ENCODE measurements at regions of chr2 and their contacts with region 1.

Region 1: DNA sequence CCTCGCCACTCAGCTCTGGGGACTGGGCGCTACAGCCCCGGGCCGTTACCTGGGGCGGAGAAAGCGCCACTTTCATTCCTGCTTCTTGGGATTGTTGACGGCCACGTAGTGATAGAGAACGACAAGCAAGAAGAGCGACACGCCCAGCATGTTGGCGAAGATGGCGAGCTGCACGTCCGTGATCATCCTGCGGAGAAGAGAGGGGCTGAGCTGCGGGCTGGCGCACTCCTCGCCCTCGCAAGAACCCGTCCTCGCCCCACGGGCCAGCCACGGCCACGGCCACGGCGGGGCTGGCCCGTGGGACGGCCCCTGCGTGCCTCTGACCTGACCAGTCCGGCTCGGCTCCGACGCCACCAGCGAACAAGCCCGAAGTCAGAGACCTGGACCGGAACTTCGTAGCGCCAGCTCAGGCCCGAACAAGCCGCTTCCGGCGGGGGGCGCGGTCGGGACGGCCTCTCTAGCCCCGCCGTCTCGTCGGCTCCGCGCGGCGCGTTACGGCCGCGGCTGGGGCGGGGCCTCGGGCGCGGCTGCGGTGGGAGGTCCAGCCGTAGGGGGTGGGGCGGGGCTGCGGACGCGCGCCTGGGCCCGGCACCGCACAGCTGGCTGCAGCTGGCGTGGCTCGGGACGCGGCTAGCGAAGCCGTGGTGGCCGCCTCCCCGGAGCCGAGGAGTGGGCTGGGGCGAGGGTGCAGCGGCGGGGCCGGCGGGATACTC is at the start of gene OST4:
- DNase-seq: peak; percentile 81 to 97 (median 87)
- ATAC-seq: peak; percentile 96
- H3K4me3 ChIP-seq: peak within 1 kb of the TSS; percentile 83
- H3K4me3 Mint-ChIP-seq: peak within 1 kb of the TSS; percentile 96 to 99 (median 97)
- H3K27ac ChIP-seq: peak within 1 kb of the TSS; percentile 97
- H3K27ac Mint-ChIP-seq: peak within 1 kb of the TSS; percentile 93 to 98 (median 97)
- H3K4me1 ChIP-seq: peaks cover 29 to 41% of the 10 kb centered on the region in 2 donors
- H3K4me1 Mint-ChIP-seq: peaks cover 57 to 86% (median 76%) of the 10 kb centered on the region in 7 donors
- H3K27me3 ChIP-seq: no peaks in the 10 kb centered on the region
- H3K27me3 Mint-ChIP-seq: no peaks in the 10 kb centered on the region
- total RNA-seq, gene OST4: 241 to 398 (median 263) TPM

Region 2: GRCh38 chr2:27032495-27033252 is 38.8 kb before region 1 on chr2 and contains the start of gene TMEM214:
- CTCF ChIA-PET with region 1: no interaction called
- POLR2A ChIA-PET with region 1: interaction called, 15 read pairs
- intact Hi-C with region 1: loop called (anchors 1 to 2 kb)
- DNase-seq: peak; percentile 54 to 88 (median 63)
- ATAC-seq: peak; percentile 97
- H3K4me3 ChIP-seq: peak within 1 kb of the TSS; percentile 99
- H3K4me3 Mint-ChIP-seq: peak within 1 kb of the TSS; percentile 91 to 97 (median 93)
- H3K27ac ChIP-seq: peak within 1 kb of the TSS; percentile 87
- H3K27ac Mint-ChIP-seq: peak within 1 kb of the TSS; percentile 84 to 95 (median 91)
- H3K4me1 ChIP-seq: peaks cover 11 to 19% of the 10 kb centered on the region in 2 donors
- H3K4me1 Mint-ChIP-seq: peaks cover 24 to 63% (median 41%) of the 10 kb centered on the region in 7 donors
- H3K27me3 ChIP-seq: no peaks in the 10 kb centered on the region
- H3K27me3 Mint-ChIP-seq: no peaks in the 10 kb centered on the region
- total RNA-seq, gene TMEM214: 36.7 to 114 (median 67.5) TPM

Region 3: DNA sequence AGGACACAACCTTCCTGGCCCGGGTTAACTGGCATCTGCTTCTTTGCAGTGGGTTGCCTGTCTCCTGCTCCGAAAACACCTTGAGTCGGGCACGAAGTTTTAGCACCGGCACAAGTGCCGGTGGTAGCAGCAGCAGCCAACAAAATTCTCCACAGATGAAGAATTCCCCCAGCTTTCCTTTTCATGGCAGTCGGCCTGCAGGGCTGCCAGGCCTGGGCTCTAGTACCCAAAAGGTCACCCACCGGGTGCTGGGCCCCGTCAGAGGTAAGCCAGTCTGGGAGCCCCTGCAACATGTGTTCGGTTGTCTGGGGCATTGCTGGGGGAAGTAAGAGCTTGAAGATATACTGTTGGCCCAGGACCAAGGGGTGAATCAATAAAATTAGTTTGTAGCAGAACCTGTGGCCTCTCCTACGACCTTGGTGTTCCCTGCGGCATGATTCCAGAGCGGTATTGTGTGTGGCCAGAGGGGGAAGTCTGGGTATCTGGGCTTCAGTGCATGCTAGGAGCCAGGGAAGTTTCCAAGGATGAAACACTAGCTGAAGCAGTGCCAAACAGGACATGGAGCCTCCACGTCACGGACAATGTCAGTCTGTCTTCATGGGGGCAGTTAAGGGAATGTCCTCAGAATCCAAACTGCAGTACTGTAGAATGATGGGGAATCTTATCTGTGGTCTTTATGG is 12.2 kb before region 1 on chr2:
- CTCF ChIA-PET with region 1: interaction called, 3 read pairs
- POLR2A ChIA-PET with region 1: interaction called, 216 read pairs
- intact Hi-C with region 1: no loop called
- DNase-seq: no peak
- ATAC-seq: no peak
- H3K4me3 ChIP-seq: no peak overlapping the region
- H3K4me3 Mint-ChIP-seq: no peak overlapping the region
- H3K27ac ChIP-seq: no peak overlapping the region
- H3K27ac Mint-ChIP-seq: peak overlapping the region in 2 of 9 donors; percentile 1 to 32
- H3K4me1 ChIP-seq: no peaks in the 10 kb centered on the region
- H3K4me1 Mint-ChIP-seq: peaks cover 0 to 22% (median 6%) of the 10 kb centered on the region in 7 donors
- H3K27me3 ChIP-seq: no peaks in the 10 kb centered on the region
- H3K27me3 Mint-ChIP-seq: no peaks in the 10 kb centered on the region

Region 4: DNA sequence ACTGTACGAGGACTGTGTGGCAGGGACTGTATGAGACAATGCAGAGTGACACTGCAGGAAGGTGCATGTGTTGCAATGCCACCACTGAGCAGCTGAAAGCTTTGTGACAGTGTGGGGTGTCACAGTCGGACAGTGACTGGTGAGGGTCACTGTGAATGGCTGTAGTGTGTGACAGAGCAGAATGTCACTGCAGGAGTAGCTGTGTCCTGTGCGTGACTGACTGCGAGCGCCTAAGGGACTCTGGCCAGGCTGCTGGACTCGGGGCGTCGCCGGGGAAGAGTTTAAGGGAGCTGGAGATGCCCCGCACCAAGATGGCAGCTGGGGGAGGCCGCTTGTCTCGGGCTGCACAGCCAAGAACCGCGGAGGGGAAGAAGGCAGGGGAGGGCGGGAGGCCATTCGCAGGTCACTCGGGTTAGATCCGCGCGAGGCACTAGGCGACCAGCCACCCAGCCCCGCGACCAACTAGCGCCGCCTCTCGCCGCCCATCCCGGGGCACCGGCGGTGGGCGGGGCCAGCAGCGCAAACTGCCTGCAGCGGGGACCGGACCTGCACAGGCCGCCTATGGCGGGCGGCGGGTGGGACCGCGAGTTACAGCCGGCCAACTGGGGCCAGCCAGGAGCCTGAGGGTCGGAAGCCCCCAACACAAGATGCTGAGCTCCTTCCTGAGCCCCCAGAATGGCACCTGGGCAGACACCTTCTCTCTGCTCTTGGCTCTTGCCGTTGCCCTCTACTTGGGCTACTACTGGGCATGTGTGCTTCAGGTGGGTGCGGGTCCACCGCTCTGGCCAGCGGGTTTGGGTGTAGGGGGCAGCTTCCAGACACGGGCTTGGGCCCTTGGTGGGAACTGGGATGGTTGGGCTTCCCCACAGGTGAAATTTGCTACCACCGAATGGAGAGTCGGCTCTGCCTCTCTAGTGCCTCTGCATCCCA is 52.1 kb after region 1 on chr2 and contains the start of gene ABHD1:
- CTCF ChIA-PET with region 1: no interaction called
- POLR2A ChIA-PET with region 1: interaction called, 14 read pairs
- intact Hi-C with region 1: no loop called
- DNase-seq: peak; percentile 37 to 79 (median 51)
- ATAC-seq: peak; percentile 84
- H3K4me3 ChIP-seq: peak within 1 kb of the TSS; percentile 59
- H3K4me3 Mint-ChIP-seq: peak within 1 kb of the TSS; percentile 83 to 95 (median 92)
- H3K27ac ChIP-seq: peak within 1 kb of the TSS; percentile 61
- H3K27ac Mint-ChIP-seq: peak within 1 kb of the TSS; percentile 78 to 89 (median 86)
- H3K4me1 ChIP-seq: peaks cover 5 to 11% of the 10 kb centered on the region in 2 donors
- H3K4me1 Mint-ChIP-seq: peaks cover 10 to 30% (median 20%) of the 10 kb centered on the region in 7 donors
- H3K27me3 ChIP-seq: peaks cover 0 to 3% of the 10 kb centered on the region in 2 donors
- H3K27me3 Mint-ChIP-seq: peaks cover 11 to 40% (median 14%) of the 10 kb centered on the region in 5 donors
- total RNA-seq, gene ABHD1: 0.53 to 2.0 (median 1.5) TPM

Region 5: GRCh38 chr2:27211829-27212627 is 140.6 kb after region 1 on chr2 and contains the starts of genes ATRAID and SLC5A6:
- CTCF ChIA-PET with region 1: no interaction called
- POLR2A ChIA-PET with region 1: interaction called, 7 read pairs
- intact Hi-C with region 1: loop called in 1 of 2 experiments (anchors 1 kb)
- DNase-seq: peak; percentile 86 to 93 (median 92)
- ATAC-seq: peak; percentile 93
- H3K4me3 ChIP-seq: peak within 1 kb of the TSS; percentile 91
- H3K4me3 Mint-ChIP-seq: peak within 1 kb of the TSS; percentile 89 to 100 (median 99)
- H3K27ac ChIP-seq: peak within 1 kb of the TSS; percentile 100
- H3K27ac Mint-ChIP-seq: peak within 1 kb of the TSS; percentile 99 to 100 (median 100)
- H3K4me1 ChIP-seq: peaks cover 14 to 17% of the 10 kb centered on the region in 2 donors
- H3K4me1 Mint-ChIP-seq: peaks cover 18 to 49% (median 42%) of the 10 kb centered on the region in 7 donors
- H3K27me3 ChIP-seq: no peaks in the 10 kb centered on the region
- H3K27me3 Mint-ChIP-seq: no peaks in the 10 kb centered on the region
- total RNA-seq, gene ATRAID: 71.0 to 113 (median 90.7) TPM
- total RNA-seq, gene SLC5A6: 25.6 to 203 (median 44.3) TPM

Region 6: GRCh38 chr2:27291865-27292264 is 220.4 kb after region 1 on chr2:
- CTCF ChIA-PET with region 1: no interaction called
- POLR2A ChIA-PET with region 1: no interaction called
- intact Hi-C with region 1: no loop called
- DNase-seq: no peak
- ATAC-seq: no peak
- H3K4me3 ChIP-seq: no peak overlapping the region
- H3K4me3 Mint-ChIP-seq: no peak overlapping the region
- H3K27ac ChIP-seq: no peak overlapping the region
- H3K27ac Mint-ChIP-seq: no peak overlapping the region
- H3K4me1 ChIP-seq: no peaks in the 10 kb centered on the region
- H3K4me1 Mint-ChIP-seq: peaks cover 0 to 2% (median 0%) of the 10 kb centered on the region in 7 donors
- H3K27me3 ChIP-seq: no peaks in the 10 kb centered on the region
- H3K27me3 Mint-ChIP-seq: peaks cover 7 to 55% (median 19%) of the 10 kb centered on the region in 5 donors

Region 7: GRCh38 chr2:27356382-27357181 is 285.1 kb after region 1 on chr2 and contains the start of gene GTF3C2:
- CTCF ChIA-PET with region 1: no interaction called
- POLR2A ChIA-PET with region 1: no interaction called
- intact Hi-C with region 1: loop called in 1 of 2 experiments (anchors 5 kb)
- DNase-seq: peak; percentile 76 to 94 (median 92)
- ATAC-seq: peak; percentile 85
- H3K4me3 ChIP-seq: peak within 1 kb of the TSS; percentile 96
- H3K4me3 Mint-ChIP-seq: peak within 1 kb of the TSS; percentile 95 to 100 (median 98)
- H3K27ac ChIP-seq: peak within 1 kb of the TSS; percentile 91
- H3K27ac Mint-ChIP-seq: peak within 1 kb of the TSS; percentile 96 to 100 (median 99)
- H3K4me1 ChIP-seq: peaks cover 24 to 34% of the 10 kb centered on the region in 2 donors
- H3K4me1 Mint-ChIP-seq: peaks cover 38 to 63% (median 56%) of the 10 kb centered on the region in 7 donors
- H3K27me3 ChIP-seq: no peaks in the 10 kb centered on the region
- H3K27me3 Mint-ChIP-seq: no peaks in the 10 kb centered on the region
- total RNA-seq, gene GTF3C2: 68.0 to 106 (median 78.3) TPM

Region 8: GRCh38 chr2:27628767-27629709 is 557.6 kb after region 1 on chr2 and contains the starts of genes CCDC121 and GPN1:
- CTCF ChIA-PET with region 1: no interaction called
- POLR2A ChIA-PET with region 1: no interaction called
- intact Hi-C with region 1: loop called (anchors 2 to 10 kb)
- DNase-seq: peak; percentile 79 to 96 (median 93)
- ATAC-seq: peak; percentile 99
- H3K4me3 ChIP-seq: peak within 1 kb of the TSS; percentile 92
- H3K4me3 Mint-ChIP-seq: no peak within 1 kb of the TSS
- H3K27ac ChIP-seq: peak within 1 kb of the TSS; percentile 92
- H3K27ac Mint-ChIP-seq: peak within 1 kb of the TSS in 5 of 9 donors; percentile 16 to 72 (median 59)
- H3K4me1 ChIP-seq: peaks cover 11 to 13% of the 10 kb centered on the region in 2 donors
- H3K4me1 Mint-ChIP-seq: peaks cover 1 to 33% (median 22%) of the 10 kb centered on the region in 7 donors
- H3K27me3 ChIP-seq: no peaks in the 10 kb centered on the region
- H3K27me3 Mint-ChIP-seq: no peaks in the 10 kb centered on the region
- total RNA-seq, gene CCDC121: 0.61 to 2.7 (median 1.9) TPM
- total RNA-seq, gene GPN1: 27.8 to 45.5 (median 28.9) TPM

Measured in naive thymus-derived CD4-positive, alpha-beta T cell (primary cell).